Activated B cell treated with CpG ODN at 0.5 μM for 24 hours (primary cell): ENCODE measurements at regions of chr3 and their contacts with region 1.

Region 1: GRCh38 chr3:187616307-187616972 is 53.8 kb downstream of the SST start:
- DNase-seq: no peak
- ATAC-seq: peak; percentile 47
- H3K4me3 Mint-ChIP-seq: no peak overlapping the region
- H3K27ac Mint-ChIP-seq: no peak overlapping the region
- H3K4me1 Mint-ChIP-seq: no peaks in the 10 kb centered on the region
- H3K27me3 Mint-ChIP-seq: peaks cover 12% of the 10 kb centered on the region
- CTCF ChIP-seq: peak; percentile 26

Region 2: DNA sequence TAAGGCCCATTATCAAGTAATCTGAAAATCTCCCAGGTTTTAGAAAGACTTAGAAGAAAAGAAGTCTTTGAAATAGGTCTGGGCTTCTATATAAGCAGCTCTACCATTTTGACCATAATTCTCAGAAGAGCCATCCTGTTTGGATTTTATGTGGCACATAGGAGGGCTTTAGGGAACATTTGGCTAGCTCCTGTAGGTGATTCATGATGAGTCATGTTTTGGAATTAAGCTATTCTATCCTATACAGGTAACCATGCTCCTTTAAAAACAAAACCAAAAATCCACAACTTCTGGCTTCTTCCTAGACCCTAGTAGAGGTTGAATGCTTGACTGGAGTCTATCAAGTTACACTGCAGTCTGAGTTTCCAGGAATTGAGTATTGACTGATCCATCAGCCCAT is 44.8 kb after region 1 on chr3:
- CTCF ChIA-PET with region 1: no interaction called
- POLR2A ChIA-PET with region 1: no interaction called
- intact Hi-C with region 1: no loop called
- DNase-seq: no peak
- ATAC-seq: no peak
- H3K4me3 Mint-ChIP-seq: no peak overlapping the region
- H3K27ac Mint-ChIP-seq: no peak overlapping the region
- H3K4me1 Mint-ChIP-seq: peaks cover 15% of the 10 kb centered on the region
- H3K27me3 Mint-ChIP-seq: no peaks in the 10 kb centered on the region
- CTCF ChIP-seq: no peak

Region 3: GRCh38 chr3:187714404-187714979 is 98.1 kb after region 1 on chr3:
- CTCF ChIA-PET with region 1: interaction called, 3 read pairs
- POLR2A ChIA-PET with region 1: no interaction called
- intact Hi-C with region 1: loop called (anchors 1 kb)
- DNase-seq: peak; percentile 32
- ATAC-seq: peak; percentile 98
- H3K4me3 Mint-ChIP-seq: no peak overlapping the region
- H3K27ac Mint-ChIP-seq: no peak overlapping the region
- H3K4me1 Mint-ChIP-seq: no peaks in the 10 kb centered on the region
- H3K27me3 Mint-ChIP-seq: no peaks in the 10 kb centered on the region
- CTCF ChIP-seq: no peak